PC-3 (cell line): ENCODE measurements at regions of chr1 and their contacts with region 1.

Region 1: GRCh38 chr1:40753142-40753882 is 30.3 kb upstream of the KCNQ4 start:
- DNase-seq: no peak
- ATAC-seq: no peak
- H3K4me3 ChIP-seq: no peak overlapping the region
- H3K27ac ChIP-seq: no peak overlapping the region
- H3K4me1 ChIP-seq: peaks cover 32% of the 10 kb centered on the region
- H3K27me3 ChIP-seq: no peaks in the 10 kb centered on the region
- CTCF ChIP-seq: no peak

Region 2: DNA sequence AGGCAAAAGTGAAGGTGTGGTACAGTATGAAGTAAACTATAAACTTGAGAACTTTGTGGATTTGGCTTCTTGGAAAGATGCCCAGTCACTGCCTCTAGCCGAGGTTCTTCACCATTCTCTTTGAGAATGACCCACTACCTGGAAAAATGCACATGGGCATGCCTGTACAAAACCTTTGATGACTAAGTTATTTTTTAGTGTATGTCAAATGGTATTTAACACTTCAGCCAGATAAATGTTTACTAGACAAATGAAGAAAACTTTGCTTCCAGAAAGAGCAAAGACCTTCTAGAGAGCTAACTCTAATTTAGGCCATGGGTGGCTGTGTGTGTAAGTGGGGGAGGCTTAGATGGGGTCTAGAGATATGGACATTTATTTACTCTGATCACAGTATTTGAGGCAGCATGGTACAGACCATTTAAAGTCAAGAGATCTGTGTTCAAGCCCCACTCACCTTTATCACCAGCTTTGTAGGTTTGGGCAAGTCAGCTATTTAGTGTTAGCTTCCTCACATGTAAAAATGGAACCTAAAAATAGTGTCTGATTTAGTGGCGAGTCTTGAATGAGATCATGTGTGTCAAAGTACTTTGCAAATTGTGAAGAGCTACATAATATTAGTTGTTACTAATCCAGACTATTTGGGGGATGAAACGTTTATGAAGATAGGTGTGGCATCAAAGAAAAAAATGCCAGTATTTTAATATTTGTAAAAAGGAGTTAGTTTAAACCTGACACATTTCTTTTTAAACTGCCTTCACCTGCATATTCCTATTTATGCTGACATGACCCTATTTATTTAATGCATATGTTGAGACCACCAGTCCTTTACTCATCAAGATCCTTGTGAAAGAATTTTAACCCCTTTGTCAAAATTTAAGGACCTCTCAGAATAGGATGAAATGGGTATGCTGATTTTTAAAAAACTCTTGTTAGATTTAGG is 41.6 kb before region 1 on chr1:
- CTCF ChIA-PET with region 1: no interaction called
- POLR2A ChIA-PET with region 1: no interaction called
- intact Hi-C with region 1: loop called (anchors 5 kb)
- DNase-seq: peak; percentile 87
- ATAC-seq: peak; percentile 70
- H3K4me3 ChIP-seq: peak overlapping the region; percentile 73
- H3K27ac ChIP-seq: peak overlapping the region; percentile 68
- H3K4me1 ChIP-seq: peaks cover 39% of the 10 kb centered on the region
- H3K27me3 ChIP-seq: no peaks in the 10 kb centered on the region
- CTCF ChIP-seq: no peak

Region 3: GRCh38 chr1:41152622-41153044 is 399.3 kb after region 1 on chr1:
- CTCF ChIA-PET with region 1: no interaction called
- POLR2A ChIA-PET with region 1: no interaction called
- intact Hi-C with region 1: no loop called
- DNase-seq: peak; percentile 96
- ATAC-seq: peak; percentile 85
- H3K4me3 ChIP-seq: no peak overlapping the region
- H3K27ac ChIP-seq: peak overlapping the region; percentile 80
- H3K4me1 ChIP-seq: peaks cover 56% of the 10 kb centered on the region
- H3K27me3 ChIP-seq: no peaks in the 10 kb centered on the region
- CTCF ChIP-seq: no peak